ENCODE measurements at regions of chr10 and their contacts with region 1.

Region 1: GRCh38 chr10:70461215-70461986 is 17.2 kb upstream of the PALD1 start:
- DNase-seq: peak; percentile 49
- H3K4me3 ChIP-seq: no peak overlapping the region
- H3K27ac ChIP-seq: no peak overlapping the region
- H3K4me1 ChIP-seq: no peaks in the 10 kb centered on the region
- H3K27me3 ChIP-seq: peaks cover 0 to 2% of the 10 kb centered on the region in 2 experiments
- CTCF ChIP-seq: peak; percentile 87
- POLR2A ChIP-seq: no peak

Region 2: DNA sequence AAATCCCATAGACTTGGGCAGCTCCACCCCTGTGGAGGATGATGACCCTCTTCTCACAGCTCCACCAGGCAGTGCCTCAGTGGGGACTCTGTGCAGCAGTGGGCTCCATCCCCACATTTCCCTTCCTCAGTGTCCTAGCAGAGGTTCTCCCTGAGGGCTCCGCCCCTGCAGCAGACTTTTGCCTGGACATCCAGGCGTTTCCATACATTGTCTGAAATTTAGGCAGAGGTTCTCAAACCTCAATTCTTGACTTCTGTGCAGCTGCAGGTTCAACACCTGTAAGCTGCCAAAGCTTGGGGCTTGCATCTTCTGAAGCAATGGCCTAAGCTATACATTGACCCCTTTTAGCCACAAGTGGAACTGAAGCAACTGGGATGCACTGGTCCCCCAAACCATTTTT is 919.9 kb before region 1 on chr10:
- CTCF ChIA-PET with region 1: no interaction called
- POLR2A ChIA-PET with region 1: no interaction called
- dilution Hi-C with region 1: no loop called
- intact Hi-C with region 1: no loop called
- DNase-seq: no peak
- H3K4me3 ChIP-seq: no peak overlapping the region
- H3K27ac ChIP-seq: no peak overlapping the region
- H3K4me1 ChIP-seq: no peaks in the 10 kb centered on the region
- H3K27me3 ChIP-seq: peaks cover 0 to 2% of the 10 kb centered on the region in 2 experiments
- CTCF ChIP-seq: no peak
- POLR2A ChIP-seq: no peak

Region 3: GRCh38 chr10:70472799-70473454 is 11.5 kb after region 1 on chr10:
- CTCF ChIA-PET with region 1: interaction called, 16 read pairs
- POLR2A ChIA-PET with region 1: no interaction called
- dilution Hi-C with region 1: no loop called
- intact Hi-C with region 1: no loop called
- DNase-seq: no peak
- H3K4me3 ChIP-seq: no peak overlapping the region
- H3K27ac ChIP-seq: no peak overlapping the region
- H3K4me1 ChIP-seq: peaks cover 8% of the 10 kb centered on the region
- H3K27me3 ChIP-seq: peaks cover 0 to 4% of the 10 kb centered on the region in 2 experiments
- CTCF ChIP-seq: no peak
- POLR2A ChIP-seq: no peak

Region 4: GRCh38 chr10:70500812-70501301 is 39.5 kb after region 1 on chr10:
- CTCF ChIA-PET with region 1: interaction called, 12 read pairs
- POLR2A ChIA-PET with region 1: no interaction called
- dilution Hi-C with region 1: no loop called
- intact Hi-C with region 1: loop called (anchors 1 kb)
- DNase-seq: peak; percentile 67
- H3K4me3 ChIP-seq: no peak overlapping the region
- H3K27ac ChIP-seq: peak overlapping the region; percentile 84
- H3K4me1 ChIP-seq: peaks cover 44% of the 10 kb centered on the region
- H3K27me3 ChIP-seq: no peaks in the 10 kb centered on the region
- CTCF ChIP-seq: no peak
- POLR2A ChIP-seq: no peak

Region 5: DNA sequence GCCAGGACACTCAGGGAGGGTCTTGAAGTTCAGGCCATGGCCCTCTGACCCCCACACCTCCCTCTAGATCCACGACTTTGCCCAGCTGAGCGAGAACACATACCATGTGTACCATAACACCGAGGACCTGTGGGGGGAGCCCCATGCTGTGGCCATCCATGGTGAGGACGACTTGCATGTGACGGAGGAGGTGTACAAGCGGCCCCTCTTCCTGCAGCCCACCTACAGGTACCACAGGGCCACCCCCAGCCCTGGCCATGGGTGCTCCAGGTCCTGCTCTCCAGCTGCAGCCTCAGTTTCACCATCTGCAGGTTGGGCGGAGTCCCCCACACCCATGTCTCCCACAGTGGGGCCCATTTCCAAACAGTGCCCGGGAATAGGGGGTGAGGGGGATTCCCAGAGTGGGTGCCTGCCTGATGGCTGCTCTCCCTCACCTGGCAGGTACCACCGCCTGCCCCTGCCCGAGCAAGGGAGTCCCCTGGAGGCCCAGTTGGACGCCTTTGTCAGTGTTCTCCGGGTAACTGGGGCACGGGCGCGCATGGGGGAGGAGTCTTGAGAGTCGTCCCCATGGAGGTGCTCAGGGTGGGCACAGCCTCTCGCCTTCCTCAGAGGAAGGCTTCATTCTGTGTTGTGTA is 71.3 kb after region 1 on chr10:
- CTCF ChIA-PET with region 1: interaction called, 196 read pairs
- POLR2A ChIA-PET with region 1: no interaction called
- dilution Hi-C with region 1: no loop called
- intact Hi-C with region 1: no loop called
- DNase-seq: no peak
- H3K4me3 ChIP-seq: no peak overlapping the region
- H3K27ac ChIP-seq: no peak overlapping the region
- H3K4me1 ChIP-seq: peaks cover 3% of the 10 kb centered on the region
- H3K27me3 ChIP-seq: no peaks in the 10 kb centered on the region
- CTCF ChIP-seq: no peak
- POLR2A ChIP-seq: no peak

Region 6: GRCh38 chr10:70549962-70550458 is 88.6 kb after region 1 on chr10:
- CTCF ChIA-PET with region 1: interaction called, 196 read pairs
- POLR2A ChIA-PET with region 1: no interaction called
- dilution Hi-C with region 1: no loop called
- intact Hi-C with region 1: no loop called
- DNase-seq: peak; percentile 59
- H3K4me3 ChIP-seq: no peak overlapping the region
- H3K27ac ChIP-seq: no peak overlapping the region
- H3K4me1 ChIP-seq: no peaks in the 10 kb centered on the region
- H3K27me3 ChIP-seq: no peaks in the 10 kb centered on the region
- CTCF ChIP-seq: peak; percentile 76 to 84
- POLR2A ChIP-seq: no peak

Region 7: DNA sequence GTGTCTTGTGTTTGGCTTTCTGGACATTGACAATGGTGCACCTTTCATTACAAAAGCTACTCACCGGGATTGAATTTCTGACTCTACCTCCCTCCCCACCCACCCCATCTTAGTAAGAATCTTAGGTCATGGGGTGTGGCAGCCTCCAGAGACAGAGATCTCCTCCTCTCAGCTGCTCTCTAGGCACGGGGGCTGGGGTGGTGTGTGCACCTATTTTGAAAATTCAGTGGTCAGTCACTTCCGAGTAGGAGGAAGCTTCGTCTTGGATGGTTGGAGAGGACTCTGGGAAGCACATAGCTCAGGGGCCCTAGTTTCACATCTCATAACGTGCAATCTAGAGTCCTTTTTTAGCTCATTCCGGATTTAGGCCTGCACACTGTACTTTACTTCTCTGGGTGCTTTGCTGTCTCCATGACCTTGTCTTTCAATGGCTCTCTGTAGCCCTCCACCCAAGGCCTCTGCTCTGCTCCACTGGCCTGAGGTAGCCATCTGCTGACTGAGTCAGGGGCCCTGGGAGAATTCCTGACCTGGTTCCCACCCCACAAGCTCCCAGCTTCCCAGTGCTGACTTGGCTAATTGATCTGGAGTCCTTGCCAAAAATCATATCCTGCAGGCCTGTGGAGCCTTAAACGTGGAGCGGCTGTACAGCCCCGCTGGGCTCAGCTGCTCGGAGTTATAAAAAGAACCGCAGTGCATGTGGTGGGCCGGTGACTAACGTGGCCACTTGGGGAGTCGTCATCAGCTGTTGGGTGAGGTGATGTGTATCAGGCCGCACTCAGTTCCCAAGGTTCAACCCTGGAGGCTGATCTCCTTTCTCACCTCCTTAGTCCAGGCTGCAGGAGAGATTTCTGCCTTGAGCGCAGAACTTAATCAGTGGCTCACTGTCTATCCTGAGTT is 191.6 kb after region 1 on chr10:
- CTCF ChIA-PET with region 1: no interaction called
- POLR2A ChIA-PET with region 1: no interaction called
- dilution Hi-C with region 1: no loop called
- intact Hi-C with region 1: no loop called
- DNase-seq: no peak
- H3K4me3 ChIP-seq: no peak overlapping the region
- H3K27ac ChIP-seq: no peak overlapping the region
- H3K4me1 ChIP-seq: no peaks in the 10 kb centered on the region
- H3K27me3 ChIP-seq: peaks cover 0 to 4% of the 10 kb centered on the region in 2 experiments
- CTCF ChIP-seq: no peak
- POLR2A ChIP-seq: no peak

Region 8: GRCh38 chr10:70880077-70880534 is 418.7 kb after region 1 on chr10:
- CTCF ChIA-PET with region 1: interaction called, 5 read pairs
- POLR2A ChIA-PET with region 1: no interaction called
- dilution Hi-C with region 1: no loop called
- intact Hi-C with region 1: loop called (anchors 10 kb)
- DNase-seq: peak; percentile 82
- H3K4me3 ChIP-seq: no peak overlapping the region
- H3K27ac ChIP-seq: no peak overlapping the region
- H3K4me1 ChIP-seq: no peaks in the 10 kb centered on the region
- H3K27me3 ChIP-seq: no peaks in the 10 kb centered on the region
- CTCF ChIP-seq: peak; percentile 80 to 85
- POLR2A ChIP-seq: no peak